Aorta (tissue), 5 donors: ENCODE measurements at regions of chr3 and their contacts with region 1.

Region 1: DNA sequence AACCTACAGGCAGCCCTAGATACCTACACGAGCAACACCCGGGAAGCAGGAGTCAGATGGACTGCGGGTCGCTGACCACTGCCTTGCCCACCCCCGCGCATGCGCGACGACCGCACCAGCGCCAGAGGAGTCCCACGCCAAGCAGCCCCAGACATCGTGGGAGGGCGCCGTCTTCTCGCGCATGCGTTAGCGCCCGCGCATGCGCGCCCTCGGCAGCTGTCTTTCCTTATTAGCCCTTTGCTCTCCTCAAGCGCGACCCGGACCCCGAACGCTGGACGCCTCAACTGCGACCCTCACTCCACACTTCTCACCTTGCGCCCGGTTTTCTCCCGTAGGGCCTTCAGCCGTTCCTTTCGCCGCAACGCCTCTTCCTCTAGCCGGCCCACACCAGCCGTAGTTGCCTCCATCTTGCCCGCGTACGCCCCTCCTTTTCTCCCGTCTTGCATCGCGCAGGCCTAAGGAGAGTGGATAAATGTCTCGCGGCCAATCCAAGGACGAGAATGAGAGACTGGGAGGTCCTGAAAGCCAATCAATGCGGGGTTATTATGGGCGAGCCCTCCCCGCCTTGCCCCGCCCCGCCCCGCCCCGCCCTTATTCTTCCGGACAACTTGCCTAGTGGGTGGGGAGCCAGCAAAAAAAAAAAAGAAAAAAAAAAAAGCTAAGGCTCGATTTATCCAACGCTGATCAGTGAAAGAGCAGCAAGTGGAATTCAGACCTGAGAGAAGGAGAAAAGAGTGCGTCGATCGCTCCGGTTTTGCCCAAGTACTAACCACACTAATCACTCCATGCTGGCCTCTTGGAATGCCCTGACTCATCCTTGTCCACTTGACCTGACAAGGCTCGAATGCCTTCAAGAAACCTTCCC is at the start of gene CCDC12:
- DNase-seq: peak; percentile 96 to 97
- ATAC-seq: peak; percentile 96
- H3K4me3 ChIP-seq: peak within 1 kb of the TSS; percentile 67 to 86
- H3K27ac ChIP-seq: peak within 1 kb of the TSS in 1 of 2 donors; percentile 68
- H3K4me1 ChIP-seq: peaks cover 1 to 5% of the 10 kb centered on the region in 2 donors
- H3K27me3 ChIP-seq: no peaks in the 10 kb centered on the region
- total RNA-seq, gene CCDC12: 30.5 to 35.9 TPM

Region 2: DNA sequence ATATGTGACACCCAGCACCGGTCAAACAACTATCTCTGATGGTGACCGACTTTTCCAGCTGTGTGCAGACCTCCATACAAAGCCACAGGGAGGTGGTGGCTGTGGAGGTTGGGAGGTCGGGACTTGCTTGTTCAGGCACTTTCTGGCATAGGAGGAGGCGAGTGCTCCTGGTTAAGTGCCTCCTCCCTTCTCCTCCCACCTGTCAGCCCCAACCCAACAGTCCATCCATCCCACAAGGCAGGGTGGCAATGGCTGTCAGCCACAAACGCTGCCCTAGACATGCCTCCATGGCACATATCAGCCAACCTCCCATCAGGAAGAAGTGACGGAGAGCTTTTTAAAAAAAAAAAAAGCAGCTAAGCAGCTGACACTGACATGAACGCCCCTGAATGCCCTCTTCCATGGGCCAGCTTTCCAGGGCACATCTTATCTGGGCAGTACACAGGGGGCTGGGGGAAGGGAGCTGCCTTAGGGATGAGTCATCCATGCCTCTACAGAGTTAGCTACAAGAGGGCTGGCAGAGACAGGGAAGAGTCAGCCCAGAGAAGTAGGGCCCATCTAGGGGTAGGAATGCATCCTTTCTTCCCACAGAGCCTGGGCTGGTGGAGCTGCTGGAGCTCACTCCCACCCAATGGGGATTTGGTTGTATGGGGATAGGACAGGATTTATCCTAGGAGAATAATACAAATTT is 41.2 kb before region 1 on chr3:
- intact Hi-C with region 1: loop called (anchors 1 to 2 kb)
- DNase-seq: peak; percentile 93
- ATAC-seq: peak; percentile 93
- H3K4me3 ChIP-seq: no peak overlapping the region
- H3K27ac ChIP-seq: peak overlapping the region; percentile 39 to 77
- H3K4me1 ChIP-seq: peaks cover 7 to 17% of the 10 kb centered on the region in 2 donors
- H3K27me3 ChIP-seq: no peaks in the 10 kb centered on the region

Region 3: GRCh38 chr3:47009225-47010110 is 32.9 kb after region 1 on chr3:
- intact Hi-C with region 1: loop called in 1 of 2 experiments (anchors 2 kb)
- DNase-seq: peak; percentile 94 to 95
- ATAC-seq: peak; percentile 95
- H3K4me3 ChIP-seq: peak overlapping the region; percentile 7 to 12
- H3K27ac ChIP-seq: peak overlapping the region in 1 of 2 donors; percentile 83
- H3K4me1 ChIP-seq: no peaks in the 10 kb centered on the region
- H3K27me3 ChIP-seq: no peaks in the 10 kb centered on the region